Aorta (tissue), 5 donors: ENCODE measurements at regions of chr4 and their contacts with region 1.

Region 1: DNA sequence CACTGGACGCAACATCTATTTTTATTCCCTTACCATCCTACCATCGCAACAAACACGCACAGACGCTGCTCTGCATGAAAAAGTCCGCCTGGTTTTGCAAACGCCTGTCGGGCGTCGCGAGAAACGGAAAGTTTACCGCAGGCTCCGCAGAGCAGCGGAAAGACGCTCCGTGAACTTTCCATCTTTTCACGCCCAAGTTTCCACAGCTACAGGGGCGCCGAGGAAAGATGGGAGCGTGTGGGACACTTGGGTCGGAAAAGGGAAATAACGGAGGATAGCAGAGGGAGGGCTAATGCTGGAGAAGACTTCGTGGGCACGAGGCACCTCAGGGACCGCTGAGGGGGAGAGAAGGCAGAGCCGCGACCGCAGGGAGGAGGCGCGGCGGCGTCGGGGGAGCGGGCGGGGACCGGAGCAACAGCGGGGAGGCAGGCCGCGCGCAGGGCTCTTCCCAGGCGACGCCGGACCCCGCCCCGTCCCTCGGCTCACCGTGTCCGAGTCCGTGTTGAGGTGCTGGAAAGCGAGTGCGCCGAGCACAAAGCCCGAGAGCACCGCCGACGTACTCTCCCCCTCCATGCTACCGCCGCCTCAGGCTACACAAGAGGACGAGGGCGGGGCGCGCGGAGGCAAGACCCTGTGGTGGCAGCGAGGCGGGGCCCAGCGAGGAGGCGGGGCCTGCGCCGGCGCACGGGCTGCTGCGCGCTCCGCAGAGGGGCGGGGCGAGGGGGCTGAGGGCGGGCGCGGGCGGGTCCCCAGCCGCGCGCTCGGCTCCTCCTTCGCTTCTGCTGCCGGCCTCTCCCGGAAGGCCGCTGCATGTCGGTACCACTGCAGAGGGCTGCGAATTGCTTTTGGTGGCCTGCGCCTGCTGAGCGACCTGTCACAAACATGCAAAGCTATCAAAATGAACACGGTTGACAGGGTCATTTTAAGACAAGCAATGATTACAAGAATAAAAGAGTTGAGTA is at the start of gene ABRAXAS1:
- DNase-seq: peak; percentile 96 to 97
- ATAC-seq: peak; percentile 99
- H3K4me3 ChIP-seq: peak within 1 kb of the TSS; percentile 83 to 97
- H3K27ac ChIP-seq: peak within 1 kb of the TSS; percentile 62 to 89
- H3K4me1 ChIP-seq: peaks cover 0 to 2% of the 10 kb centered on the region in 2 donors
- H3K27me3 ChIP-seq: no peaks in the 10 kb centered on the region
- total RNA-seq, gene ABRAXAS1: 12.0 to 21.0 TPM

Region 2: DNA sequence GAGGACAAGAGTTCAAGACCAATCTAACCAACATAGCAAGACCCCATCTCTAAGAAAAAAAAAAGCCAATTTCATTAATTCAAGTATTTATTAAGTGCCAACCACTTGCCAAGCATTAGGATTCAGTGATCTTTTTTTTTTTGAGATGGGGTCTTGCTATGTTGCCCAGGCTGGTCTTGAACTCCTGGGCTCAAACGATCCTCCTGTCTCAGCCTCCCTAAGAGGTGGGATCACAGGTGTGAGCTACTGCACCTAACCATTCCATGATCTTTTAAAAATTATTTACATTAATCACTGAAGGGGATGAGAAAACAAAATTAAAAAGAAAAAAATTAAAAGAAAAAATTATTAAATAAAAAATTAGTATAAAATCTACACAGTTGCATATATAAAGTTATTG is 53.6 kb before region 1 on chr4:
- intact Hi-C with region 1: no loop called
- DNase-seq: no peak
- ATAC-seq: no peak
- H3K4me3 ChIP-seq: no peak overlapping the region
- H3K27ac ChIP-seq: no peak overlapping the region
- H3K4me1 ChIP-seq: no peaks in the 10 kb centered on the region
- H3K27me3 ChIP-seq: no peaks in the 10 kb centered on the region

Region 3: GRCh38 chr4:83455281-83456129 is 29.3 kb before region 1 on chr4 and contains the starts of genes HELQ and MRPS18C:
- intact Hi-C with region 1: loop called in 1 of 2 experiments (anchors 2 kb)
- DNase-seq: peak; percentile 96 to 98
- ATAC-seq: peak; percentile 98
- H3K4me3 ChIP-seq: peak within 1 kb of the TSS; percentile 93 to 96
- H3K27ac ChIP-seq: peak within 1 kb of the TSS; percentile 71 to 95
- H3K4me1 ChIP-seq: peaks cover 4 to 5% of the 10 kb centered on the region in 2 donors
- H3K27me3 ChIP-seq: no peaks in the 10 kb centered on the region
- total RNA-seq, gene HELQ: 11.6 to 17.0 TPM
- total RNA-seq, gene MRPS18C: 38.2 to 41.5 TPM

Region 4: GRCh38 chr4:83535520-83536361 is 51.0 kb after region 1 on chr4 and contains the start of gene GPAT3:
- intact Hi-C with region 1: loop called in 1 of 2 experiments (anchors 2 kb)
- DNase-seq: peak; percentile 85 to 93
- ATAC-seq: peak; percentile 93
- H3K4me3 ChIP-seq: peak within 1 kb of the TSS; percentile 43 to 46
- H3K27ac ChIP-seq: no peak within 1 kb of the TSS
- H3K4me1 ChIP-seq: no peaks in the 10 kb centered on the region
- H3K27me3 ChIP-seq: no peaks in the 10 kb centered on the region
- total RNA-seq, gene GPAT3: 5.1 to 7.5 TPM

Region 5: GRCh38 chr4:83644677-83645659 is 160.2 kb after region 1 on chr4:
- intact Hi-C with region 1: no loop called
- DNase-seq: no peak
- ATAC-seq: peak; percentile 70
- H3K4me3 ChIP-seq: no peak overlapping the region
- H3K27ac ChIP-seq: no peak overlapping the region
- H3K4me1 ChIP-seq: no peaks in the 10 kb centered on the region
- H3K27me3 ChIP-seq: no peaks in the 10 kb centered on the region